Activated naive CD4-positive, alpha-beta T cell treated with anti-CD3 and anti-CD28 coated beads for 36 hours (primary cell): ENCODE measurements at regions of chr2 and their contacts with region 1.

Region 1: DNA sequence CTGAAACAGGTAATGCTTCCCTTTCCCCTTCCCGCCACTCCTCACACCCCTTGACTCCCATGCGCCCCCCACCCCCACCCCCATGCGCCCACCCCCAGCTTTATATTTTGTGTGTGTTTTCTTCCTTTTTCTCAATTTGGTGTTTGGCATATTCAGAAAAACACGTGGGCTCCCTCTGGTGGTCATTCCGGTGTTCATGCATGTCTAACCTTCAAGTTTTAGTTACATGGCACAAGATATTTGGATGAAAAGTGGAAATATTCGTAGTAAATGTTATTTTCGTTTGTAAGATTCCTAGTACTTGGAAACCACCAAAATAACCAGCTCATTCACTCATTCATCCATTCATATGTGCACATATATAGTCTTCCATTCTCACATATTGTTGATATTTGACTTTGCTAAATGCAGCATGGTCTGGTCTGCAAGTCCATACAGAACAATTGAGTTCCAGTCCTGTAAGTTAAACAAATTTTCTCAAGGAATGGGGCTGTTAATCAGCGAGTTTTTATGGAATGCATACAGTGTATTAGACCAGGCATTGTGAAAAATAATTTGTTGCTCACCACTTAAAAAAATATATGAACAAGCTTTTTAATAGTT is 143.6 kb upstream of the MAP3K20 start:
- DNase-seq: peak; percentile 85
- H3K4me3 Mint-ChIP-seq: no peak overlapping the region
- H3K27ac Mint-ChIP-seq: no peak overlapping the region
- H3K4me1 Mint-ChIP-seq: peaks cover 9% of the 10 kb centered on the region
- H3K27me3 Mint-ChIP-seq: no peaks in the 10 kb centered on the region

Region 2: DNA sequence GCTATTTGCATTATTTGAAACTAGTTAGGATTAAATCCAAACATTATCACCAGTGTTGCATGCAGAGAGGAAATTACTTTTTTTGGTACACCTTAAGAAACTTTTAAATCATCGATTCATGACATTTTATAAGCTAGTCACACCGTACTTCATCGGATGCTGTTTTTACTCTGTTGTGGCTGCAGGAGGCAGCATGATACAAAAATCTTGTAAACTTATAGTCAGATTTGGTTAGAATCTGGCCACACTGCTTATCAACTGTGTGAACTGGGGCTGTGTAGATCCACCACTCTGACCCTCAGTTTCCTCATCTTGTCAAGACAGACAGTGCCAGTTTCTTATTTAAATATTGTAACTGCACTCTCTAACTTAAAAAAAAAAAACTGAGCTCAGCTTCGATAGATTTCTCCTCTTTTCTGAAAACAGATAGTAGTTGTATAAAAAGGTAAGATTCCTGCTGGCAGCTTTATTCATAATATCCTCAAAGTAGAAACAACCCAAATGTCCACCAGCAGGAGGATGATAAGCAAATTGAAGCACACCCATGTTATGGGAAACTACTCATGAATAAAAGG is 118.6 kb before region 1 on chr2:
- CTCF ChIA-PET with region 1: interaction called, 46 read pairs
- intact Hi-C with region 1: no loop called
- DNase-seq: no peak
- H3K4me3 Mint-ChIP-seq: no peak overlapping the region
- H3K27ac Mint-ChIP-seq: no peak overlapping the region
- H3K4me1 Mint-ChIP-seq: no peaks in the 10 kb centered on the region
- H3K27me3 Mint-ChIP-seq: peaks cover 2% of the 10 kb centered on the region

Region 3: DNA sequence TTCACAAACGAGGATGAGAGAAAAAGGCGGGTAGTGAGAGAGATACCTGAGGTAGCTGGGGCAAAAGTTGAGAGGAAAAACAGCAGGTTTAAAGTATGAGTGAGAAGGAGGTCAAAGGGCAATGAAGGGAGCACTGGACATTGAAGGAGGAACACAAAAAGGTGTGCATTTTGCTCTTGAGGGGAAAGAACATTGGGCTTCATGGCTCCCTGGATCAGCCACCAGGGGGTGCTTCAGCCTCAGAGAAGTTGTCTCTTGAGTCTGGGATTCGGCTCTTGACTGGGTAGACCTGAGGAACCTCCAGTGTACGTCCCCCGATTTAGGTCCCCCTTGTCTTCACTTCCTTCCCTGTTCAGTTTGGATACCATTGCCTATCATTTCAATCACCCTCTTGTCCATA is 67.8 kb before region 1 on chr2:
- CTCF ChIA-PET with region 1: interaction called, 20 read pairs
- intact Hi-C with region 1: loop called (anchors 1 kb)
- DNase-seq: peak; percentile 78
- H3K4me3 Mint-ChIP-seq: no peak overlapping the region
- H3K27ac Mint-ChIP-seq: no peak overlapping the region
- H3K4me1 Mint-ChIP-seq: no peaks in the 10 kb centered on the region
- H3K27me3 Mint-ChIP-seq: peaks cover 16% of the 10 kb centered on the region